Activated T-helper 1 cell treated with anti-CD3 and anti-CD28 coated beads, Interleukin-12 subunit alpha, Interleukin-12 subunit beta, Interleukin-2, Interleukin-4 antibody, amounts not matched to agents 30 ng/mL and 10 ng/mL and 1 ng/mL, durations not matched to agents 14 hours and 24 hours and 36 hours (primary cell): ENCODE measurements at regions of chr9 and their contacts with region 1.

Region 1: DNA sequence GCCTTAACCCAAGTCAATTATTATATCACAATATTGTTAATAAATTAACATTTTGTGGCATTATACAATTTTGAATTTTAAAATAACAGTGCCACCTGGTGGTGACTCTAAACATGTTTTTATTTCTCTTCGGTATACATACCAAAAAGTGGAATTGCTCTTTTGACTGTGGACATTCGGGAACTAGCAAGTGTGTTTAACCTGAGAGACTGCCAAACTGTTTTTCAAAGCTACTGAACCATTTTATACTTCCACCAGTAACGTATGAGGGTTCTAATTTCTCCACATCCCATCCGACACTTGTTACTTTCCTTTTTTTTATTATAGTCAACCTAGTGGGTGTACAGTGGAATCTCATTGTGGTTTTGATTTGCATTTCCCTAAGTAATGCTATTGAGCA is 18.3 kb upstream of the HSDL2 start:
- DNase-seq: no peak
- H3K4me3 Mint-ChIP-seq: no peak overlapping the region
- H3K27ac Mint-ChIP-seq: no peak overlapping the region
- H3K4me1 Mint-ChIP-seq: peaks cover 12% of the 10 kb centered on the region
- H3K27me3 Mint-ChIP-seq: peaks cover 26% of the 10 kb centered on the region

Region 2: GRCh38 chr9:111759762-111760639 is 601.6 kb before region 1 on chr9:
- intact Hi-C with region 1: loop called (anchors 1 kb)
- DNase-seq: peak; percentile 39
- H3K4me3 Mint-ChIP-seq: no peak overlapping the region
- H3K27ac Mint-ChIP-seq: no peak overlapping the region
- H3K4me1 Mint-ChIP-seq: no peaks in the 10 kb centered on the region
- H3K27me3 Mint-ChIP-seq: peaks cover 2% of the 10 kb centered on the region

Region 3: GRCh38 chr9:112086627-112087026 is 275.0 kb before region 1 on chr9:
- intact Hi-C with region 1: loop called (anchors 1 kb)
- DNase-seq: no peak
- H3K4me3 Mint-ChIP-seq: no peak overlapping the region
- H3K27ac Mint-ChIP-seq: no peak overlapping the region
- H3K4me1 Mint-ChIP-seq: peaks cover 5% of the 10 kb centered on the region
- H3K27me3 Mint-ChIP-seq: no peaks in the 10 kb centered on the region

Region 4: DNA sequence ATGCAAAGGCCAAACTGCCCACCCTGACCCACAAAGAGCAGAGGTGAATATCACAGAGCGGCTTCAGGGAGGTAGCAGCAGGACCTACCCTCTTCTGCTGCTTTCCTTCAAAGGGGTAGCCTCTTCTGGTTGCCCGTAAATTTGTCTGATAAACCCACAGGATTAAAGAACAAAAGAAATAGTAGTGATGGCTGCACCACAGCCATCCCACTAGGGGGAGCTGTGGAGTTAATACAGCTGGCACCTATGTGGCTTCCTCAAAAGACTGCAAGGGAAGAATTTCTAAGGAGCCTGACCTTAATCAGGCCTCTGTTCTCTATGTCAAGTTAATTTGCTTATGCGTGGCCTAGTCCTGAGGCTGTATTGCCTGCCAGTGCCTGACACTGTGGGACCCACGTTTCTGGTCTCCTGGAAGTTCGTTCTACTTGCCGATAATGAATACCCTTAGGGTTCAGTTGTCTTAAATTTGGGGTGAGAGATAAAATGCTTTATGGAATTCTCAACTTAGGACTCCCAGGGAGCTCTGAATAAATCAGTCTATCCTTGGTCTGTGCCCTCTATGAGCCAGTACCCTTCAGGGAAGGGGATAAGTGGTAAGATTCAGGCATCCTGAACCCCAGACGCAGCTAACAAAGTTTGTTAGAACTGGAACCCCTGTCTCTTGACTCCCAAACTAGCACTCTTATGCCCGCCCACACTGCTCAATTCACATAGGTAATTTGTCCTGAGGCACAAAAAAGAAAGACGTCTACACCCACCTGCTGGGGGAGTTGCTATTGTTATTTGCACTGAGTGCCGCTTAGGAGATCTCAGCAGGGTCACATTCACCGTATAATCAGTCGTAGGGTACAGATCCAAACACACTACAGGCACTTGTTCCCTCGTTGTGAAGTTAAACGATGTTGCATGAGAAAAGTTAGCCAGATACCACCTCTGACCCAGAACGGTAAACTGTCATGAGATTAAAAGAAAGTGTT is 263.6 kb before region 1 on chr9:
- intact Hi-C with region 1: loop called (anchors 1 kb)
- DNase-seq: peak; percentile 54
- H3K4me3 Mint-ChIP-seq: no peak overlapping the region
- H3K27ac Mint-ChIP-seq: no peak overlapping the region
- H3K4me1 Mint-ChIP-seq: peaks cover 32% of the 10 kb centered on the region
- H3K27me3 Mint-ChIP-seq: peaks cover 2% of the 10 kb centered on the region

Region 5: DNA sequence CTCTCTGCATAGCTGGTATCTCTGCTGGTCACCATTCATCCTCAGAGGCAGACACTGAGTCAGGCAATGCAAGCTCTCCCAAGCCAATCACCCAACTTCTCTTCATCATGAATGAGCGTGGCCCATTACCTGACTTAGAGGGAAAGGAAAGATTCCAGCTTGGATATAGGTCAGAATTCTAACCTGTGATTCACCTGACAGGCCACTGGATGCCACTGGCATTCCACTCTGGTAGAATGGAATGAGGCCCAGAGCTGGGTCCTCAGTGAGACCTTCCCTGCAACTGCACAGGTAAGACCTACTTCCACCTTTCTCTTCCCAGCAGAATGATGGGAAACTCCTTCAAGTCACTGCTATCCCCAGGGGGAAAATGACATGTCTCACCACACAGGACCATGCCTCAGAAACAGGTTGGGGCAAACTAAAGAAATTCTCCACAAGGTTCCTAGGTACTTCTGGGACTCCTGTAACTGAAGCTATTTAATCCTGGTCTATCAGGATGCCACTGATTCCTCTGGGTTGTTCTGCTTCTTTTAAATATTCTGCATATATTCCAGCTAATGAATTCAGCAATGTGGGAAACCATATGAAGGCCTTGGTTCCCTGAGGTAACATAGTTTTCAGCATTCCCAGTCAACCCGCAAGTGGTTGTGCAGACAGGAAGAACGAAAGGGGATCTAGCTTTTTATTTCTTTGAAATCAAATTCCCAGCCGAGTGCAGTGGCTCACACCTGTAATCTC is 248.5 kb before region 1 on chr9:
- intact Hi-C with region 1: loop called (anchors 1 kb)
- DNase-seq: no peak
- H3K4me3 Mint-ChIP-seq: no peak overlapping the region
- H3K27ac Mint-ChIP-seq: no peak overlapping the region
- H3K4me1 Mint-ChIP-seq: no peaks in the 10 kb centered on the region
- H3K27me3 Mint-ChIP-seq: no peaks in the 10 kb centered on the region

Region 6: DNA sequence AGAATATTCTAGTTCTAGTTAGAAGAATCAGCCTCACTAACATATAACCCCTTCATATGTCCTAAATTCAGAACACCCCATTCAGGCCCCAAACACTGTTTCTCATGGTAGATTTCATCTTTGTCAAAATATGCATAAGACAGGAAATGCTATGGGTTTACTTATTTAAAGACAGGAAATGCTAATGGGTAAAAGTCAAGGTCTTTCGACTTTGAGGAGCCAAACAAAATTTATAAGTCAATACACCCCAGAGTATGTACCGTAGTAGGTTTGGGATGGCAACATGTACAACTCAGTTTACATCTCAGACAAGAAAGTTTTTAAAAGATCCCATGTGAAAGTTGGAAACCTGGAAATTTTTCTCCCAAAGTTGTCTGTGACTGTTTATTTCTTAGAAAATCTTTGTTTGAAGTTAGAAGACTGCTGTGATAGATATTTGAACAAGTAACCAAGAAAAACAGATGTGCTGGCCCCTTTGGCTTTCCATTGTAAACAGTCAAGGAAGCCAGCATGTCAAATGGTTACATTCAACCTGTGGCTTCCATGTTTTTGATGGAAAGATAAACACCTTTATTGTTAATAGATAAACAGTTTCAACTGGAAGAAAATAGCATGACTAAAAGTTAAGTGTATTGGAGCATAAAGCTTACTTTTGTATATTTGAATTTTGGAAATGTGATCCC is 254.1 kb after region 1 on chr9:
- intact Hi-C with region 1: no loop called
- DNase-seq: no peak
- H3K4me3 Mint-ChIP-seq: no peak overlapping the region
- H3K27ac Mint-ChIP-seq: no peak overlapping the region
- H3K4me1 Mint-ChIP-seq: no peaks in the 10 kb centered on the region
- H3K27me3 Mint-ChIP-seq: no peaks in the 10 kb centered on the region